WTC11 (cell line): ENCODE measurements at regions of chr12 and their contacts with region 1.

Region 1: DNA sequence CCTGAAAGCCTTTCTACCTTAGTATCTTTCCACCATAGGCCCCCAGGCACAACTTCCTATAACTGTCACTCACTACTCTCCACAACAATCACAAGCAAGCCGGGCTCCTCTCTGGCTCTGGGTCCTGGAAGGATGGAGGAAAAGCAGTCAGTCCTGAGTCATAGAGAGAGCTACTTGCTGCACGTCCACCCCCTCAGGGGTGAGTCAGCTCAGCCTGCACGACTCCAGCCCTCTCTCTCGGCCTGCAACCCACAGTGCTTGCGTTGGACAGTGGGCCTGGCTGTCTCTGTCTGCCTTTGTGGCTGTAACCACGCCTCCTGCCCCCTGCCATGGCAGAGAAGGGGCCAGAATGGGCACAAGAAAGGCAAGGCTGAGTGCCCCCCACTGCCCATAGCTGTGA is 154.1 kb upstream of the FKBP4 start:
- DNase-seq: peak; percentile 11
- ATAC-seq: peak; percentile 43
- H3K4me3 Mint-ChIP-seq: no peak overlapping the region
- H3K27ac Mint-ChIP-seq: peak overlapping the region; percentile 40; the same call in 1 of the 2 replicates
- H3K4me1 Mint-ChIP-seq: peaks cover 36% of the 10 kb centered on the region
- H3K27me3 Mint-ChIP-seq: no peaks in the 10 kb centered on the region
- CTCF ChIP-seq: no peak

Region 2: GRCh38 chr12:2451025-2451424 is 189.7 kb before region 1 on chr12:
- CTCF ChIA-PET with region 1: no interaction called
- POLR2A ChIA-PET with region 1: no interaction called
- DNase-seq: no peak
- ATAC-seq: no peak
- H3K4me3 Mint-ChIP-seq: no peak overlapping the region
- H3K27ac Mint-ChIP-seq: no peak overlapping the region
- H3K4me1 Mint-ChIP-seq: peaks cover 3% of the 10 kb centered on the region; the same call in 1 of the 2 replicates
- H3K27me3 Mint-ChIP-seq: no peaks in the 10 kb centered on the region
- CTCF ChIP-seq: no peak

Region 3: GRCh38 chr12:2652401-2653081 is 11.8 kb after region 1 on chr12:
- CTCF ChIA-PET with region 1: interaction called, 38 read pairs
- POLR2A ChIA-PET with region 1: no interaction called
- DNase-seq: peak; percentile 70
- ATAC-seq: peak; percentile 88
- H3K4me3 Mint-ChIP-seq: no peak overlapping the region
- H3K27ac Mint-ChIP-seq: no peak overlapping the region
- H3K4me1 Mint-ChIP-seq: no peaks in the 10 kb centered on the region
- H3K27me3 Mint-ChIP-seq: no peaks in the 10 kb centered on the region
- CTCF ChIP-seq: no peak

Region 4: DNA sequence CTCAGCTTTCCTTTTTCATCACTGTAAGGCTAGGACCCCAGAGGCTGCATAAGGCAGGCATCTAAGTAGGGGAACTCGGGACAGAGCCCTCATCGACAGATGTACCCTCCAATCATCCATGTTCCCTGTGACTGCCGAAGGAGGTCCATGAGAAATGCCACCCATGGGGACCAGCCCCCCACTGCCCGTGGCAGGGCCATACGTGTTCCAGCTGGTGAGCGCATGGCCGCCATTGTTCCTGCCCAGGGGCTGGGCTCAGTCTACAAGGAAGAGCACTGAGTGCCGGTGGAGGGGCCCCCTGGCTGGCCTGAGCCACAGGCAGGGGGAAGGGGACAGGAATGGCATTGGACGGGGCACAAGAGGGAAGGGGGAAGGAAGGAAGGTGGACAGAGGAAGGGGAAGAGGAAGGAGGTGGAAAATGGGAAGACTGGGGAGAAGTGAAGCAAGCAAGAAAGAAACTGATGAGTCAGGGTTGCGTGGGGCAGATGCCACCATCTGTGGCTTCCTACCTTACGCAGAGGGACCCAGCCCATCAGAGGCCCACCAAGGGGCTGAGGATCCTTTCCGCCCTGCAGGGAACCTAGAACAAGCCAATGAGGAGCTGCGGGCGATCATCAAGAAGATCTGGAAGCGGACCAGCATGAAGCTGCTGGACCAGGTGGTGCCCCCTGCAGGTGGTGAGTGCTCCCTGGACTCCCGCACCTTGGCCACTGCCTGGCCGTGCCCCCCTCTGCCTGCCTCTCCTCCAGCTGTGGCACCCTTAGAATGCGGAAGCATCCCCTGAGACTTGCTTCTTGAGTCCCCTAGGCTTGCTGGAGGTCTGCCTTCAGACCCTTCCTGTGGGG is 33.5 kb after region 1 on chr12:
- CTCF ChIA-PET with region 1: interaction called, 14 read pairs
- POLR2A ChIA-PET with region 1: no interaction called
- DNase-seq: peak; percentile 61
- ATAC-seq: peak; percentile 75
- H3K4me3 Mint-ChIP-seq: no peak overlapping the region
- H3K27ac Mint-ChIP-seq: no peak overlapping the region
- H3K4me1 Mint-ChIP-seq: no peaks in the 10 kb centered on the region; the same call in 1 of the 2 replicates
- H3K27me3 Mint-ChIP-seq: no peaks in the 10 kb centered on the region
- CTCF ChIP-seq: peak; percentile 38; the same call in 1 of the 2 replicates